PC-3 (cell line): ENCODE measurements at regions of chr14 and their contacts with region 1.

Region 1: DNA sequence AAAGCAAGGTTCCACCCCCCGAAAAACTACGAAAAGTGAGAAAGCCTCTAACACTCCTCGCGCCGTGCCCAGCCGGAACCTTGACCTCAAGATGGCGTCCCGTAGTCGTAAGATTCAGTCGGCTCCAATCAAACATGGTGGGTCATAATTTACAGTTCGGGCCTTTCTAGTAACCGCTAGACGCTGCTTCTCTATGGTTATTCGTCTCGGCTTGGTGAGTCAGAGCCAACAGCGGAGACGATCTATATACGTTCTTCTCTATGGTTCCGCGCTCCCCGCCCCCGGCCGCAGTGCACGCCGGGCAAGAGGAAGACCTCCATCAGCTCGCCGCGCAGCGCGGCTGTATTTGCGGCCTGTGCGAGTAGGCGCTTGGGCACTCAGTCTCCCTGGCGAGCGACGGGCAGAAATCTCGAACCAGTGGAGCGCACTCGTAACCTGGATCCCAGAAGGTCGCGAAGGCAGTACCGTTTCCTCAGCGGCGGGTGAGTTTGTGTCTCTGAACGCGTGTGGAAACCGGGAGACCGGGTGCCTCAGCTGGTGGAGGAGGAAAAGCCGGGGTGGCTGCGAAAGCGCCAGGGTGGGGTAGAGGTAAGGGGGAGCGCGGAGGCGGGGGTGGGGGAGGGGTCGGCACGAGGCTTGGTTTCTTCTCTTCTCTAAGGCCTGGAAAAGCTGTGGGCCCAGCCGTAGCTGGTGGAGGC is at the start of gene RBM25:
- DNase-seq: peak; percentile 99
- ATAC-seq: peak; percentile 94
- H3K4me3 ChIP-seq: peak within 1 kb of the TSS; percentile 86
- H3K27ac ChIP-seq: peak within 1 kb of the TSS; percentile 78
- H3K4me1 ChIP-seq: peaks cover 22% of the 10 kb centered on the region
- H3K27me3 ChIP-seq: no peaks in the 10 kb centered on the region
- CTCF ChIP-seq: no peak; the same call in 1 of the 2 replicates
- total RNA-seq, gene RBM25: 53.2 and 64.7 TPM in 2 replicates

Region 2: DNA sequence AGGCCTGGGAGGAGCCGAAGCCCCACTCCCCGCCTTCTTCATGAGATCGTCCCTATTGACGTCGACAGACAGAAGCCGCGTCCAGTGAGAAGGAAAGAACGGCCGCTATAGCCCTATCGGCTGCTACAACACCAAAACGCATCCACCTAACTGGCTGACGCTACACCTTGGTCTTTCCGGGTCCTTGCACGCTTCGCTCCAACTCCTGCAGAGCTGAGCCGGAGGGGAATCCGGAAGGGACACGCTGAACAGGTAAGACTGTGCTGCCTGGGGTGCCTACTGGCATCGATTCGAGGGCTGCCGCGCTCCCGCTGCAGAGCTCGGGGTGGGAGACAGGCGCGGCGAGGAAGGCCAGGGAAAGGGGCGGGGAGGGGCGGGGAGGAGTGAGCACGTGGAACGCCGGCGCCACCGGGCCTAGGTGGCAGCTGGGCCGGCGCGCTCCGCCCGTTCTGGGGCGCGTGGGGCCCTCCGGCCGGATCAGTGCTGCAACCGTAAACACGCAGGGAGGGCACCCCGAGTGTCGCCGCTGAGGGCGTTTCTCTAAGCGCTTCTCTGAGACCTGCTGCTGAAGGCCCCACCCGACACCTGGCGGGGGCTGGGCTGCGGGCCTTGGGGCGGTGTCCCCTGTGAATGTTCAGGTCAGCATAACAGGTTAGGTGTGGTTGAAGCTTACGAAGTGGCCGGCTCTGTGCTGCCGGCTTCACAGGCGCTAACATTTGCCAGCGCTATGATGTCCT is 131.9 kb before region 1 on chr14 and contains the start of gene DCAF4:
- CTCF ChIA-PET with region 1: no interaction called
- POLR2A ChIA-PET with region 1: interaction called, 12 read pairs
- intact Hi-C with region 1: loop called (anchors 1 kb)
- DNase-seq: peak; percentile 99
- ATAC-seq: peak; percentile 96
- H3K4me3 ChIP-seq: peak within 1 kb of the TSS; percentile 77
- H3K27ac ChIP-seq: peak within 1 kb of the TSS; percentile 63
- H3K4me1 ChIP-seq: peaks cover 12% of the 10 kb centered on the region
- H3K27me3 ChIP-seq: no peaks in the 10 kb centered on the region
- CTCF ChIP-seq: no peak
- total RNA-seq, gene DCAF4: 55.8 and 56.8 TPM in 2 replicates

Region 3: GRCh38 chr14:72962829-72963312 is 95.5 kb before region 1 on chr14:
- CTCF ChIA-PET with region 1: no interaction called
- POLR2A ChIA-PET with region 1: no interaction called
- intact Hi-C with region 1: loop called (anchors 5 kb)
- DNase-seq: peak; percentile 91
- ATAC-seq: peak; percentile 40
- H3K4me3 ChIP-seq: no peak overlapping the region
- H3K27ac ChIP-seq: peak overlapping the region; percentile 69; the same call in 1 of the 2 replicates
- H3K4me1 ChIP-seq: peaks cover 28% of the 10 kb centered on the region
- H3K27me3 ChIP-seq: no peaks in the 10 kb centered on the region
- CTCF ChIP-seq: no peak

Region 4: DNA sequence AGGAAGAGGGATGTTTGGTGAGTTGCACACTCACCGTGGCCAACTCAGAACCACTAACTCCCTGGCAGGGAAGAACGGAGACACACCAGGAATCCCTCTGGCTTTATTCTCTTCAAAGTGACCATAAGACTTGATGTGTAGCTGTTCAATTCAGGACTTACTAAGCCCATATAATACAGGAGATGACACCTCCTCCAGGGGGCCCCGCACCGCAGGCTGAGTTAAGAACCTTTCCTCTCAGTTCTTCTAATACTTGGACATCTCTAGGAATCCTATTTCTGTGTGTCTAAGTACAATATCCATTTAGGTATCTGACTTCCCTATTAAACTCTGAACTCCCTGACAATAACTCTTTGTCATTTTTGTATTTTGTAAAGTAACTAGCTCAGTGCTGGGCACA is 82.6 kb before region 1 on chr14:
- CTCF ChIA-PET with region 1: no interaction called
- POLR2A ChIA-PET with region 1: no interaction called
- intact Hi-C with region 1: loop called (anchors 5 kb)
- DNase-seq: peak; percentile 40
- ATAC-seq: peak; percentile 69
- H3K4me3 ChIP-seq: no peak overlapping the region
- H3K27ac ChIP-seq: no peak overlapping the region
- H3K4me1 ChIP-seq: no peaks in the 10 kb centered on the region
- H3K27me3 ChIP-seq: no peaks in the 10 kb centered on the region
- CTCF ChIP-seq: peak; percentile 73

Region 5: GRCh38 chr14:73069585-73069984 is 11.2 kb after region 1 on chr14:
- CTCF ChIA-PET with region 1: no interaction called
- POLR2A ChIA-PET with region 1: interaction called, 7 read pairs
- intact Hi-C with region 1: loop called (anchors 1 kb)
- DNase-seq: no peak
- ATAC-seq: no peak
- H3K4me3 ChIP-seq: no peak overlapping the region
- H3K27ac ChIP-seq: no peak overlapping the region
- H3K4me1 ChIP-seq: peaks cover 9% of the 10 kb centered on the region
- H3K27me3 ChIP-seq: no peaks in the 10 kb centered on the region
- CTCF ChIP-seq: no peak

Region 6: DNA sequence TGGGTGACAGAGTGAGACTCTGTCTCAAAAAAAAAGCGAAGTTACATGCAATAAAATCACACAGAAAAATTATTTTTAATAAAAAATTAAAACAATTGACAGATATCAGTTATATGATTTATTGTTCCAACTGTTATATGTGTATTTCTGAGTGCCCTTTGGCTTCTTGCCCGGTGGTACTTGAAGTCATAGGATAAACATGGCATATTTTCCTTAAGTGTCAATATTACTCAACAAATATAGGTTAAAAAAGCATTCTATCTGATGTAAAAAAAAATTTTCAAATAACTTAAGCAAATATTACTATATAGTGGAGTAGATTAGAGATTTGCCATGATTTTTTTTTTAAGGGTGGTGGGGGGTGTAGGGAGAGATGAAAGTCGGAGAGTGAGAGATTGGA is 33.5 kb after region 1 on chr14:
- CTCF ChIA-PET with region 1: no interaction called
- POLR2A ChIA-PET with region 1: no interaction called
- intact Hi-C with region 1: no loop called
- DNase-seq: peak; percentile 89
- ATAC-seq: peak; percentile 82
- H3K4me3 ChIP-seq: no peak overlapping the region
- H3K27ac ChIP-seq: no peak overlapping the region; the same call in 1 of the 2 replicates
- H3K4me1 ChIP-seq: peaks cover 6% of the 10 kb centered on the region
- H3K27me3 ChIP-seq: no peaks in the 10 kb centered on the region
- CTCF ChIP-seq: no peak

Region 7: DNA sequence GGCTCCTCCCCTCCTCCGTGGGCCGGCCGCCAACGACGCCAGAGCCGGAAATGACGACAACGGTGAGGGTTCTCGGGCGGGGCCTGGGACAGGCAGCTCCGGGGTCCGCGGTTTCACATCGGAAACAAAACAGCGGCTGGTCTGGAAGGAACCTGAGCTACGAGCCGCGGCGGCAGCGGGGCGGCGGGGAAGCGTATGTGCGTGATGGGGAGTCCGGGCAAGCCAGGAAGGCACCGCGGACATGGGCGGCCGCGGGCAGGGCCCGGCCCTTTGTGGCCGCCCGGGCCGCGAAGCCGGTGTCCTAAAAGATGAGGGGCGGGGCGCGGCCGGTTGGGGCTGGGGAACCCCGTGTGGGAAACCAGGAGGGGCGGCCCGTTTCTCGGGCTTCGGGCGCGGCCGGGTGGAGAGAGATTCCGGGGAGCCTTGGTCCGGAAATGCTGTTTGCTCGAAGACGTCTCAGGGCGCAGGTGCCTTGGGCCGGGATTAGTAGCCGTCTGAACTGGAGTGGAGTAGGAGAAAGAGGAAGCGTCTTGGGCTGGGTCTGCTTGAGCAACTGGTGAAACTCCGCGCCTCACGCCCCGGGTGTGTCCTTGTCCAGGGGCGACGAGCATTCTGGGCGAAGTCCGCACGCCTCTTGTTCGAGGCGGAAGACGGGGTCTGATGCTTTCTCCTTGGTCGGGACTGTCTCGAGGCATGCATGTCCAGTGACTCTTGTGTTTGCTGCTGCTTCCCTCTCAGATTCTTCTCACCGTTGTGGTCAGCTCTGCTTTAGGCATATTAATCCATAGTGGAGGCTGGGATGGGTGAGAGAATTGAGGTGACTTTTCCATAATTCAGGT is 78.2 kb after region 1 on chr14 and contains the start of gene PSEN1:
- CTCF ChIA-PET with region 1: no interaction called
- POLR2A ChIA-PET with region 1: no interaction called
- intact Hi-C with region 1: no loop called
- DNase-seq: peak; percentile 96
- ATAC-seq: peak; percentile 81
- H3K4me3 ChIP-seq: peak within 1 kb of the TSS; percentile 75
- H3K27ac ChIP-seq: peak within 1 kb of the TSS; percentile 71
- H3K4me1 ChIP-seq: peaks cover 13% of the 10 kb centered on the region
- H3K27me3 ChIP-seq: no peaks in the 10 kb centered on the region
- CTCF ChIP-seq: no peak
- total RNA-seq, gene PSEN1: 41.4 and 43.0 TPM in 2 replicates

Region 8: DNA sequence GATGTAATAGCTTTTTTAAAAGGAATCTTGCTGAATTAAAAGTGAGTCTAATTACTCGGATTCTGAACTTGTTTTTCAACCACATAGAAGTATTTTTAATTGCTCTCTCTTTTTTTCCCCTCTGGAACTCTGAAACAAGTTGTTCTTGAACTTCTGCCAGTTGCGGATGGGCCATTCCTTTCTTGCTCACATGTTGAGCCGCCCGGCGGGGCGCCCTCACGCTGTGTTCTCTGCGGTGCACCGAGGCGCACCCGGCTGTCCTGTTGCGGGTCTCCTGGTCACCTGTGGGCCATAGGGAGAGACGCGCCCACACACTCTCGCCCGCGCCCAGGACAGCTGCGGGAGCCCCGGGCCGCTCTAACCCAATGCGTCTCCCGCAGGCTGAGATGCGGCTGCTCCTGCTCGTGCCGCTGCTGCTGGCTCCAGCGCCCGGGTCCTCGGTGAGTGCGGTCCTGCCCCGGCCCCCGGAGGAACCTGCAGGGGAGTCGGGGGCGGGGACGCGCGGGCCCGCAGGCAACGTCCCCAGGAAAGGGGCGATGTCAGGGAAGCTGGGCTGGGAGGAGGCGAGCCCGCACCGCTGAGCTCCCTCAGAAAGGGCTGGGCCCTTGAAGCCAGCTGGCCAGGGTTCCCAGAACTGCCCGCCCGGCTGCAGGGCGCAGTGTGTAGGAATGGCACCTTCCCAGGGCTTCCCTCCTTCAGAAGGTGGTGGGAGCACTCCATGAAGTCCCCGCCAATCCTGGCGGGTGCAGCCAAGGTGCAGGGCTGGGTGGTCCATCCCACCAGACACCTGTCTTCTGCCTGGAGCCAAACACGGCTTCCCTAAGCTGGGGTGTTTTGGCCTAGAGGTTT is 181.2 kb after region 1 on chr14:
- CTCF ChIA-PET with region 1: no interaction called
- POLR2A ChIA-PET with region 1: no interaction called
- intact Hi-C with region 1: loop called (anchors 2 kb)
- DNase-seq: peak; percentile 47
- ATAC-seq: peak; percentile 12
- H3K4me3 ChIP-seq: peak overlapping the region; percentile 62
- H3K27ac ChIP-seq: no peak overlapping the region
- H3K4me1 ChIP-seq: peaks cover 30% of the 10 kb centered on the region
- H3K27me3 ChIP-seq: peaks cover 50% of the 10 kb centered on the region
- CTCF ChIP-seq: peak; percentile 25; the same call in 1 of the 2 replicates